B cell (primary cell): ENCODE measurements at regions of chr12 and their contacts with region 1.

Region 1: GRCh38 chr12:10771132-10771733 is 31.2 kb downstream of the TAS2R7 start:
- DNase-seq: peak; percentile 53
- ATAC-seq: no peak
- H3K4me3 ChIP-seq: no peak overlapping the region
- H3K4me3 Mint-ChIP-seq: no peak overlapping the region
- H3K27ac ChIP-seq: no peak overlapping the region
- H3K27ac Mint-ChIP-seq: no peak overlapping the region
- H3K4me1 ChIP-seq: no peaks in the 10 kb centered on the region
- H3K4me1 Mint-ChIP-seq: no peaks in the 10 kb centered on the region
- H3K27me3 ChIP-seq: peaks cover 0 to 26% (median 3%) of the 10 kb centered on the region in 4 experiments
- H3K27me3 Mint-ChIP-seq: peaks cover 41% of the 10 kb centered on the region
- CTCF ChIP-seq: peak; percentile 77

Region 2: DNA sequence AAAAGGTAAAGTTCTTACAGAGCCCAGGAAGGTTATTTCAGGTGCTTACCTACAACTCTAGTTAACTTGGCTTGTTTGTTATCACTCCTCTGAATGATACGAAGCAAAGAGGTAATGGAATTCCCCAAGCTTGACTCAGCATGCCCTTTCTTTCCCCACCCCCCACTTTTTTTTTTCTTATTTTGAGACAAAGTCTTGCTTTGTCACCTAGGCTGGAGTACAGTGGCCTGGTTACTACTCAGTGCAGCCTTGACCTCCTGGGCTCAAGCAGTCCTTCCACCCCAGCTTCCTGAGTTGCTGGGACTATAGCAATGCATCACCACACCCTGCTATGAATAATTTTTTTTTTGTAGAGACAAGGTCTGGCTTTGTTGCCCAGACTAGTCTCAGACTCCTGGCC is 31.1 kb before region 1 on chr12:
- CTCF ChIA-PET with region 1: no interaction called
- POLR2A ChIA-PET with region 1: no interaction called
- intact Hi-C with region 1: no loop called
- DNase-seq: no peak
- ATAC-seq: no peak
- H3K4me3 ChIP-seq: no peak overlapping the region
- H3K4me3 Mint-ChIP-seq: no peak overlapping the region
- H3K27ac ChIP-seq: no peak overlapping the region
- H3K27ac Mint-ChIP-seq: no peak overlapping the region
- H3K4me1 ChIP-seq: no peaks in the 10 kb centered on the region
- H3K4me1 Mint-ChIP-seq: no peaks in the 10 kb centered on the region
- H3K27me3 ChIP-seq: no peaks in the 10 kb centered on the region
- H3K27me3 Mint-ChIP-seq: peaks cover 4% of the 10 kb centered on the region
- CTCF ChIP-seq: no peak

Region 3: GRCh38 chr12:11202811-11203210 is 431.6 kb after region 1 on chr12:
- CTCF ChIA-PET with region 1: interaction called, 34 read pairs
- POLR2A ChIA-PET with region 1: no interaction called
- intact Hi-C with region 1: no loop called
- DNase-seq: no peak
- ATAC-seq: no peak
- H3K4me3 ChIP-seq: no peak overlapping the region
- H3K4me3 Mint-ChIP-seq: no peak overlapping the region
- H3K27ac ChIP-seq: no peak overlapping the region
- H3K27ac Mint-ChIP-seq: no peak overlapping the region
- H3K4me1 ChIP-seq: no peaks in the 10 kb centered on the region
- H3K4me1 Mint-ChIP-seq: no peaks in the 10 kb centered on the region
- H3K27me3 ChIP-seq: no peaks in the 10 kb centered on the region
- H3K27me3 Mint-ChIP-seq: no peaks in the 10 kb centered on the region
- CTCF ChIP-seq: no peak